Head of caudate nucleus (tissue), 42 donors: ENCODE measurements at regions of chr14 and their contacts with region 1.

Region 1: DNA sequence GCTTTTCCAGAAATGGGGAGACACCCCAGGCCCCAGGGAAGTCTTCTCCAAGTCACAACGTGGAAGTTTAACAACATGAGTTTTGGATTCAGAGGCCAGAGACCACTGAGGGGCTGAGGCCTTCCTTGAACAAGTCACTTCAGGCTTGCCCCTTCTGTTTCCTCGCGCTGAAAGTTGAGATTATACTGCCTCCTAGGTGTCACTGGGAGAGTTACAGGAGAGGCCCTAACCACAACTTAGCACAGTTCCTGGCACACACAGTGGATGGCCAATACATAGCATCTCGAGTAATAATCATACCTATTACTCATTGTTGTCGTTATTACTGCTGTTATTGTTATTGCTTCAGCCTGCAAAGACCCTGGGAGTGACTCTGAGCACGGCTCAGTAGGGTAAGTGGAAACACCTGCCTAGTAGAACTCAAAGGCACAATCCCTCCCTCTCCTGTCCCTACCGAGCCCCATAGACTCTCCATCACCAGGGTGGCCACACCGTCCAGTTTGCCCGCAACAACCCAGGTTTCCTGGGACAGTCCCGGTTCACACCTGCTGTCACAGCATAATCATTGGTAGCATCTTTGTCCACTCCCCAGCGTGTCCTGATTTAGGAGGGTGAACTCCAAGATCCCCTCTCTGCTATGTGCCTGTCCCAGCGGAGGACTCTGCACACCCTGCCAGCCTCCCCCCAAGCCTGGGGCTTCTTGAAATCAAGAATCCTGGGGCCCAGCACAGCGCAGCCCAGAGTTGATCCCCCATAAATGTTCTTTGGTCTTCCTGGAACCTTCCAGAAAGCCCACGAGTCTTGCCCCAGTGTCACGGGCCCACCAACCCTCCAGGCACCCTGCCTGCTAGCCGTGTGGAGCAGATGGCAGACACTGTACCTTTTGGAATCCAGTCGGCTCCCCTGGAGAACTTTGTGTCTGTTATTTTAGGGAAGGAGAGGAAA is 85.0 kb downstream of the SYNE3 start:
- DNase-seq: peak in 15 of 42 donors; percentile 20 to 62 (median 36)

Region 2: DNA sequence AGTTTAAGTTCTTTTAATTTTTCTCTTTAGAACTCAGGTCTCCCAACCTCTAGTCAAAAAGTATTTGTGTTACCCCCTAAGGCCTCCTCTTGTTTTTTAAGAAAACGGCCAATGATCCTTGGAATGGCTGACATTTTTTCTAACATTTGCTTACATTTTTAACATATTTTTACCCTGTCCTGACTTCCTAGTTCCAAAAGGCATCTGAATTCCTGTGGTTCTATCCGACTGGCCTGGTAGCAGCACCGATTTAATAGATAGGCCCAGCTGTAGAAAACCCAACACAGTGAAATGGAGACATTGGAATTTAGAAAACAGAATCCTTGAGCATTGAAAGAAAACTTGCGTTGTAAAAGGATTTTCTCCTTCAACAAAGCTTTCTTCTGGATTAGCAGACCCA is 526.8 kb before region 1 on chr14:
- intact Hi-C with region 1: loop called (anchors 10 kb)
- DNase-seq: no peak

Region 3: GRCh38 chr14:95098984-95099599 is 332.4 kb before region 1 on chr14:
- intact Hi-C with region 1: loop called (anchors 10 kb)
- DNase-seq: peak; percentile 29 to 88 (median 70)